Prostate gland (tissue), 2 donors: ENCODE measurements at regions of chr19 and their contacts with region 1.

Region 1: DNA sequence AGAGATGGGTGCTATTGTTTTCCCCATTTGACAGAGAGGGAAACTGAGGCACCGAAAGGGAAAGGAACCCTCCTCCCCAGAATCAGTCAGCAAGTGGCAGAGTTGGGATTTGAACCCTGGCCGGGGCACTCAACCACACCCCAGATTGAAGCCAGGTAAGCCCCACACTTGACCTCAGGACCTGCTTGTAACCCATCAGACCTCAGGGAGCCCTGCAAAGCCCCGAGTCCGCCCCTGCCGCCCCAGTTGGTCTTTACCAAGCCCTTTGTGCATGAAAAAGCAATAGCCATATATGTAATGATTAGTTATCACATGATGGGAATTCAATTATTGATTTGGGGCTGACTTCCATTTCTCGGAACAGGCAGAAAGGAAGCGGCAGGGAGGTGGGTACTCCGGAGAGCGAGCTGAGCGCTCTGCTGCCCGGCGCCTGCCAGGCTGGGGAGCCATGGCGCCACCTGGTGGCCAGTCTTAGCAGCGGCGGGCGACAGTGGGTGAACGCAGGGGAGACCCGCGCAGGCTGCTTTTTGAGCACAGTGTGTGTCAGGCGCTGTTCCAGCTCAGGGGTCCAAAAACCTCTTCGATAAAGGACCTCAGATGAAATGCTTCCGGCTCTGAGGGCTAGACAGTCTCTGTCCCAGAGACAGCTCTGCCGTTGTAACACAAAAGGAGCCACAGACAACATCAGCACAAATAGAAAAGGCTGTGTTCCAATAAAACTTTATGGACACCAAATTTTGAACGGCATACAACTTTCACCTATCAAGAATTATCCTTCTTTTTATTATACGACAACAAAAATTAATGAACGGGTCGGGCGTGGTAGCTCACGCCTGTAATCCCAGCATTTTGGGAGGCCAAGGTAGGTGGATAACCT is 82.9 kb upstream of the CACNA1A start:
- DNase-seq: peak; percentile 47
- H3K4me3 ChIP-seq: no peak overlapping the region
- H3K27ac ChIP-seq: no peak overlapping the region
- H3K4me1 ChIP-seq: no peaks in the 10 kb centered on the region
- H3K27me3 ChIP-seq: peaks cover 5% of the 10 kb centered on the region
- CTCF ChIP-seq: peak; percentile 81 to 89 (median 83)
- POLR2A ChIP-seq: no peak

Region 2: DNA sequence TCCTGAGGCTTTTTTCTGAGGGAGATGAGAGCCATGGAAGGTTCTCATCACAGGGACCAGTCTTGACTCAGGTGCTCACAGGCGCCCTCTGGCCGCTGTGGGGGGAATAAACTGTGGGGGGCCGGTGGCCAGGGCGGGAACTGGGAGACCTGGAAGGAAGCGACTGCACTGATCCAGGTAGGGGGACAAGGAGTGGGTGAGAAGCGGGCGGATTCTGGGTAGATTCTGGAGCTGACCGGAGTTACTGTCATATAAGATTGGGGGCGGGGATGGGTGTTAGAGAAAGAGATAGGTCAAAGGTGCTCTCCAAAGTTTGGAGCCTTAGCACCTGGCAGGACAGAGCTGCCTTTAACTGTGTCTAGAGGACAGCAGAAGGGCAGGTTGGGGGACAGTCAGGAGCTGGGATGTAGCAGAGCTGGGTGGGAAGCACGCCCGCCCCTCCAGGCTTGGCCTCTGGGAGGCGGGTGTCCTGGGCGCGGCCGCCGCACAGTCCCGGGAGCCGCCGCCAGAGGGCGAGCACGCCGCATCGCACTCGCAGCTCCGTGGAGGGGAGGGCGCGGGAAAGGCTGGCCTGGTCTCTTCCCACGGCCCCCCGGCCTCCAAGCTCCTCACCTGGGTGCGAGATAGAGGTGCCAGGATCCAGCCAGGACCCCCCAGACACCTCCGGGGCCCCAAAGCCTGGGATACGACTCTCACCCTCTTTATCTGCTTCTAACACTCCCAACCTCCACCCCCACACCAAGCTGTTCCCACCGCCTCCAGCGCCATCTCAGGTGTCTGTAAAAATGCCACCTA is 624.0 kb before region 1 on chr19:
- intact Hi-C with region 1: loop called (anchors 10 kb)
- DNase-seq: peak; percentile 61
- H3K4me3 ChIP-seq: peak overlapping the region; percentile 19 to 31
- H3K27ac ChIP-seq: peak overlapping the region; percentile 62 to 66
- H3K4me1 ChIP-seq: no peaks in the 10 kb centered on the region
- H3K27me3 ChIP-seq: no peaks in the 10 kb centered on the region
- CTCF ChIP-seq: peak; percentile 80 to 97 (median 90)
- POLR2A ChIP-seq: no peak

Region 3: DNA sequence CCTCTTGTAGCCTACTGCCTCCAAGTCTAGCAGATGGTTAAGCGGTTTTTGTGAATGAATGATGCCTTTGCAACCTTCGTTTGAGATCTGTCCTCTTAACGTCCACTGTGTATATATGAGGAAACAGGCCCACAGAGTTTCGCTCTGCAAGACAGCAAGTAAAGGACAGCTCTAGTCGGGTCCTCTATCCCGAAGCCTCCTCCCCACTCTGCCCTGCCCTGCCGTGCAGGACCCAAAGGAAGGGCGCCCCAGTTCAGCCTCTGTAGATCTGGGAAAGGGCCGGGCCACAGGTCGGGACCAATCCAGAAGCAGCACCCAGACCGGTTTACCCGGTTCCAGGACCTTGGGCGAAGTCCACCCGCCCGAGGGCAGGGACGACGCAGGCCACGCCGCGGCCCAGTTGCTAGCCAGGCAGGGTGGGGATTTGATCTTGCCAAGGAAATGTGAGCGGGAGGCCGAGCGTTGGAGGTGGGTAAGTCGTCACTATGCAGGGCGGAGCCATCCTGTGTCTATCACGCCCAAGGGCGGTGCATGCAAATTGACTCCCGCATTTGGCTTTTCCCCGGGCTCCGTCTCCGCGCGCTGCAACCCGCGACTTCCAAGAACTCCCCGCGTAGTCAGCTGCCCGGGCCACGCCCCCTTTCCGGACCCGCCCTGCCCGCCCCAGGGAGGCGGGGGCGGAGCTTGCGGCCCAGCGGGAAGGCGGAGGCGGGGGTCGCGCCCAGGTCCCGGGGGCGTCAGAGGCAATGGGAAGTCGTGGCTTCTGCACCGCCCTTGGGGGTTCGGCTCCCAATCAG is 426.5 kb before region 1 on chr19:
- intact Hi-C with region 1: no loop called
- DNase-seq: peak; percentile 99
- H3K4me3 ChIP-seq: peak overlapping the region; percentile 12 to 35
- H3K27ac ChIP-seq: peak overlapping the region; percentile 93 to 94
- H3K4me1 ChIP-seq: peaks cover 8% of the 10 kb centered on the region
- H3K27me3 ChIP-seq: no peaks in the 10 kb centered on the region
- CTCF ChIP-seq: peak in 1 of 4 experiments; percentile 5
- POLR2A ChIP-seq: no peak

Region 4: DNA sequence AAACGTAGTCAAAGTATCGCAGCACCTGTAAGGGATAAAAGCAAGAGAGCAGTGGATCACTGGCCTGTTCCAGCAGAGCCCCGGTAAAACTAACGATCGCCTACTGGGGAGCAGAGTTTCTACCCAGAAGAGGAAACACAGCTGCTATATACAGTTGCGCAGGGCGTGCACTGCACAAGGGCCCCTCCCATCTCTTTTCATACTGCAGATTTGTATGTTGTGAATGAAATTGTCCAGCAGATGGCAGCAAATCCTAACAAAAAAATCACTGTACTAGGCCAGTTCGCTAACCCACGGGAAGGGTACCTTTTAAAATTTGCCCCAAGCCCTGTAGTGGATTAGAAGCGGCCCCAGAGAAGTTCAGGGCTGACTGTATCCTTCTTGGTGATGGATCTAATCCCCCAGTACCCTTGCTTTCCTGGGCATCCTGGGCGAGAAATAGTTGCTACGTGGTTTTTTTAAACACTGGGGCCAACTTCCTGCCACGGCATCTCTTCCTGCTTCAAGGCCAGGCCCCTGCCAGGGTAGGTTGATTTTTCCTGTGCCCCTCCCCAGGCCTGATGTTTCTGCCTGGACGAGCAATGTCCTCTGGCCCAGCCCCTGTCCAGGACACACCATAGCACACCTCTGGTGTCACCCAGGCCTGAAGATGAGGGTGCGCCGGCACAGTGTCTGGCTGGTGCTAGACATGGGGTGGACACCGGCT is 311.9 kb before region 1 on chr19:
- intact Hi-C with region 1: loop called (anchors 2 kb)
- DNase-seq: peak; percentile 49
- H3K4me3 ChIP-seq: no peak overlapping the region
- H3K27ac ChIP-seq: no peak overlapping the region
- H3K4me1 ChIP-seq: no peaks in the 10 kb centered on the region
- H3K27me3 ChIP-seq: no peaks in the 10 kb centered on the region
- CTCF ChIP-seq: peak; percentile 42 to 79 (median 74)
- POLR2A ChIP-seq: no peak